AG04449 (cell line): ENCODE measurements at regions of chr4 and their contacts with region 1.

Region 1: GRCh38 chr4:88706574-88706973 is 8.9 kb upstream of the NAP1L5 start:
- DNase-seq: no peak
- H3K4me3 ChIP-seq: no peak overlapping the region
- CTCF ChIP-seq: peak; percentile 60

Region 2: GRCh38 chr4:88573995-88574394 is 132.6 kb before region 1 on chr4:
- CTCF ChIA-PET with region 1: no interaction called
- POLR2A ChIA-PET with region 1: no interaction called
- DNase-seq: no peak
- H3K4me3 ChIP-seq: no peak overlapping the region
- CTCF ChIP-seq: peak; percentile 40

Region 3: DNA sequence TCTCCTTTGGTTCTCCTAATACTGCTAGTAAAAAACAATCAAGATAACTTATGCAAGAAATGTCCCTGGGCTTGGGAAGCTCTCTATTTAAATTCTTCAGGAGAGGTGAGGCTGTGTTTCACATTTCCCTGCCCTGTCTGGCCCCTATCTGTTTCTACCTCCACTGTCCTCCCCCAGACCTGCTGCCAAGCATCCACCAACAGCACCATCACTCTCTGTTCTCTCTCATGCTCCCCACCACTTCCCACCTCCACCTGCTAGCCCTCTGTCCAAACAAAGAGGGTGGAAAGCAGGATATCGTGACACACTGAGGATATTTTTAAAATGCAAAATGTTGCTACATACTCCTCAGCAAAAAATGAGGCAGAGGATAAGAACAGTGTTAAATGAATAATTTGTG is 79.4 kb after region 1 on chr4:
- CTCF ChIA-PET with region 1: interaction called, 23 read pairs
- POLR2A ChIA-PET with region 1: no interaction called
- DNase-seq: no peak
- H3K4me3 ChIP-seq: no peak overlapping the region
- CTCF ChIP-seq: no peak

Region 4: DNA sequence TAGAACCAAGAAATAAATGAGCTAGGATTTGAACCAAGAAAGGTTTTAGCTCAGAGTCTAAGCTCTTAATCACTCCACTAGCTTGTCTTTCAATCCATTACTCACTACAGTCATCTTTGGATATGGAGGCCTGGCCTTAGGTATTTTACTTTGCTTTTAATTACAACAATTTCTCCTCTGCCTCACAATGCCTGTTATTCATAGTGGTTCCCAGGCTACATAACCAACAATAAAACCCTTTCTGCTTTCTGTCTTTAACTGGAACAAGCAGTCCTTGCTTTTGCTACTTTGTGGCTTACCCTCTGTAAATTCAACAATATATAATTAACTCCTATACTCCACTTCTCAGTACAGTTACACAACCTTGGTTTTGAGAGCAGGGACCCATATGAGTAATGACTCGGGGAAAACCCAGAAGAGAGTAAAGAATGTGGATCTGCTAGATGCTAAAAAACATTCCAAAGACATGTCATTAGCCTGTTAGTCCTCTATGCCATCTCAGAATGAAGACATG is 85.8 kb after region 1 on chr4:
- CTCF ChIA-PET with region 1: interaction called, 23 read pairs
- POLR2A ChIA-PET with region 1: no interaction called
- DNase-seq: peak; percentile 84
- H3K4me3 ChIP-seq: no peak overlapping the region
- CTCF ChIP-seq: no peak

Region 5: GRCh38 chr4:88818631-88819470 is 112.3 kb after region 1 on chr4:
- CTCF ChIA-PET with region 1: interaction called, 13 read pairs
- POLR2A ChIA-PET with region 1: no interaction called
- DNase-seq: no peak
- H3K4me3 ChIP-seq: no peak overlapping the region
- CTCF ChIP-seq: peak; percentile 45

Region 6: GRCh38 chr4:88843067-88843685 is 136.6 kb after region 1 on chr4:
- CTCF ChIA-PET with region 1: no interaction called
- POLR2A ChIA-PET with region 1: no interaction called
- DNase-seq: no peak
- H3K4me3 ChIP-seq: no peak overlapping the region
- CTCF ChIP-seq: no peak